HCT116 (cell line): ENCODE measurements at regions of chr17 and their contacts with region 1.

Region 1: GRCh38 chr17:58631523-58632323 is 60.1 kb downstream of the TEX14 start:
- DNase-seq: peak; percentile 100
- ATAC-seq: peak; percentile 90
- H3K4me3 ChIP-seq: peak overlapping the region; percentile 39 to 48
- H3K27ac ChIP-seq: peak overlapping the region; percentile 80
- H3K4me1 ChIP-seq: peaks cover 11 to 18% of the 10 kb centered on the region in 2 experiments
- H3K27me3 ChIP-seq: no peaks in the 10 kb centered on the region
- CTCF ChIP-seq: peak in 2 of 3 experiments; percentile 7 to 16; a peak in 1 of 6 replicates
- POLR2A ChIP-seq: peak; percentile 100
- RAD21 ChIP-seq: peak; percentile 50

Region 2: GRCh38 chr17:58517734-58518609 is 113.8 kb before region 1 on chr17:
- CTCF ChIA-PET with region 1: interaction called, 19 read pairs
- POLR2A ChIA-PET with region 1: interaction called, 121 read pairs
- RAD21 ChIA-PET with region 1: no interaction called
- intact Hi-C with region 1: loop called (anchors 1 kb)
- DNase-seq: peak; percentile 100
- ATAC-seq: peak; percentile 80
- H3K4me3 ChIP-seq: peak overlapping the region; percentile 72 to 85
- H3K27ac ChIP-seq: peak overlapping the region; percentile 76
- H3K4me1 ChIP-seq: peaks cover 21 to 41% of the 10 kb centered on the region in 2 experiments
- H3K27me3 ChIP-seq: no peaks in the 10 kb centered on the region
- CTCF ChIP-seq: no peak
- POLR2A ChIP-seq: peak; percentile 42
- RAD21 ChIP-seq: no peak

Region 3: GRCh38 chr17:58577642-58578091 is 54.1 kb before region 1 on chr17:
- CTCF ChIA-PET with region 1: interaction called, 4 read pairs
- POLR2A ChIA-PET with region 1: interaction called, 70 read pairs
- RAD21 ChIA-PET with region 1: no interaction called
- intact Hi-C with region 1: no loop called
- DNase-seq: peak; percentile 77
- ATAC-seq: peak; percentile 87
- H3K4me3 ChIP-seq: no peak overlapping the region
- H3K27ac ChIP-seq: no peak overlapping the region
- H3K4me1 ChIP-seq: peaks cover 5 to 21% of the 10 kb centered on the region in 2 experiments
- H3K27me3 ChIP-seq: no peaks in the 10 kb centered on the region
- CTCF ChIP-seq: peak; percentile 56 to 98 (median 93); a peak in 5 of 6 replicates
- POLR2A ChIP-seq: no peak
- RAD21 ChIP-seq: peak; percentile 66

Region 4: DNA sequence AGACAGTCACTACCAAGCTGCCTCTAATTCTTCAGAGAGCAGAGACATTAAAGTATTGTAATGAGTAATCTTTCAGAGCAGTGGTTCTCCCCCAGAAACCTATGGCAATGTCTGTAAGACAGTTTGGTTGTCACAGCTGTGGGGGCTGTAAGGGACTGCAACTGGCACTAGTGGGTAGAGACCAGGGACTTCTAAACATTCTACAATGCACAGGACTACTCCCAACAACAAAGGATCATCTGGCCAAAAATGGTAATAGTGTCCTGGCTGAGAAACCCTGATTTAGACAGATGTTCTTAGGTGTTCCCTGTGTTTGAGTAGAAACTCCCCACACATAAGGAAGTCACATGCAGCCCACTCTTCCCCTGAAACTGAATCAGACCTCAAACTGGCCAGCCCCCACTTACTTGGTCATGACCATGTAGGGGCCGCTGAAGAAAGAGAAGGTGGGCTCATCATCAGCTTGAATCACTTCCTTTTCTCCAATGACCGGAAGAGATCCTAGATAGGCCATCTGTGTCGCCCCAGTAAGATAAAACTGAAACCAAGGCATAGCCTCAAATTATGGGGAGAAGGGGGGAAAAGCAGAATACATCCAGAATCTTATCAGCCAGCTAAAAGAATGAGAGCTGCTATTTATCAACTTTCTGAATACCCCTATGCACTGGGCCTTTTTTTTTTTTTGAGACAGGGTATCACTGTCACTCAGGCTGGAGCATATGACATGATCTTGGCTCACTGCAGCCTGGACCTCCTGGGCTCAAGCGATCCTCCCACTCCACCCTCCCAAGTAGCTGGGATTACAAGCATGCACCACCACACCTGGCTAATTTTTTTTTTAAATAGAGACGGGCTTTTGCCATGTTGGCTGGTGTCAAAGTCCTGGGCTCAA is 15.7 kb before region 1 on chr17:
- CTCF ChIA-PET with region 1: no interaction called
- POLR2A ChIA-PET with region 1: interaction called, 45 read pairs
- RAD21 ChIA-PET with region 1: no interaction called
- intact Hi-C with region 1: no loop called
- DNase-seq: no peak
- ATAC-seq: no peak
- H3K4me3 ChIP-seq: no peak overlapping the region
- H3K27ac ChIP-seq: no peak overlapping the region
- H3K4me1 ChIP-seq: no peaks in the 10 kb centered on the region
- H3K27me3 ChIP-seq: no peaks in the 10 kb centered on the region
- CTCF ChIP-seq: no peak
- POLR2A ChIP-seq: no peak
- RAD21 ChIP-seq: no peak

Region 5: DNA sequence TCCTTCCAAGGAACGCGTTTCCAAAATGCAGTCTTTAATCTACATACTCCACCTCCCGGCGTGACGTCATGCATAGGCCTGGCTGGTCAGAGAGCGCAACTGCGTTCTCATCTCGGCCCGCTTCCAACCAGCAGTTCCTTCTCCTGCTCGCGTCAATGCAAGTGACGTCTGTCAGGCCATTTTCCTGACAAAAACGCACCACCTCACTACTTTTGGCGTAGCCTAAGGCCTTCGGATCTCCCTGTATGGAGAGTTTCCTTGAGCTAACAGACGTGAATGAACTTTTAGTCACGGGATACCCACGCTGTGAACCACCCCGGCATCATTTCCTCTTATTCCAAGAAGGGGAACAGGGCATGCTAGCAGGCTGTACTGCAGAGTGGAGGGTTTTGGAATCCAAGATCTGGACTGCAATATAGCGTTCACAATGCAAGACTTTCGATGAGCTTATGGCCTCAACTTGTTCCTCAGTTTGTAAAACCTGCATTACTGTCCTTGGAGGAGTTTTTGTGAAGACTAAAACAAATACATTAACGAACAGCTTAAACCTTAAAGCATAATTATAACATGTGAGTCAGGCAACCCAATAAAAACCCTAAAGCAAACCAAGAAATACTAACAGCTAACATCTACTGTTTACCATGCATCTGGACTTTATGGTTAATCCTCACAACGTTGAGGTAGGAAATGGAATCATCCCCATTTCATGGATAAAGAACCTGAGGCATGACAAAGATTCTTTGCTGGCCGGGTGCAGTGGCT is 35.3 kb after region 1 on chr17:
- CTCF ChIA-PET with region 1: interaction called, 7 read pairs
- POLR2A ChIA-PET with region 1: interaction called, 338 read pairs
- RAD21 ChIA-PET with region 1: no interaction called
- intact Hi-C with region 1: no loop called
- DNase-seq: peak; percentile 81
- ATAC-seq: peak; percentile 49
- H3K4me3 ChIP-seq: peak overlapping the region; percentile 26 to 46; a peak in 2 of 4 replicates
- H3K27ac ChIP-seq: no peak overlapping the region
- H3K4me1 ChIP-seq: peaks cover 25 to 50% of the 10 kb centered on the region in 2 experiments; a peak in 3 of 4 replicates
- H3K27me3 ChIP-seq: no peaks in the 10 kb centered on the region
- CTCF ChIP-seq: no peak
- POLR2A ChIP-seq: no peak
- RAD21 ChIP-seq: no peak

Region 6: GRCh38 chr17:59004338-59005111 is 372.8 kb after region 1 on chr17:
- CTCF ChIA-PET with region 1: interaction called, 6 read pairs
- POLR2A ChIA-PET with region 1: interaction called, 13 read pairs
- RAD21 ChIA-PET with region 1: no interaction called
- intact Hi-C with region 1: no loop called
- DNase-seq: peak; percentile 59
- ATAC-seq: peak; percentile 88
- H3K4me3 ChIP-seq: no peak overlapping the region
- H3K27ac ChIP-seq: no peak overlapping the region
- H3K4me1 ChIP-seq: no peaks in the 10 kb centered on the region
- H3K27me3 ChIP-seq: no peaks in the 10 kb centered on the region
- CTCF ChIP-seq: peak; percentile 91 to 99 (median 98)
- POLR2A ChIP-seq: no peak
- RAD21 ChIP-seq: peak; percentile 97